T-cell (primary cell): ENCODE measurements at regions of chr15 and their contacts with region 1.

Region 1: DNA sequence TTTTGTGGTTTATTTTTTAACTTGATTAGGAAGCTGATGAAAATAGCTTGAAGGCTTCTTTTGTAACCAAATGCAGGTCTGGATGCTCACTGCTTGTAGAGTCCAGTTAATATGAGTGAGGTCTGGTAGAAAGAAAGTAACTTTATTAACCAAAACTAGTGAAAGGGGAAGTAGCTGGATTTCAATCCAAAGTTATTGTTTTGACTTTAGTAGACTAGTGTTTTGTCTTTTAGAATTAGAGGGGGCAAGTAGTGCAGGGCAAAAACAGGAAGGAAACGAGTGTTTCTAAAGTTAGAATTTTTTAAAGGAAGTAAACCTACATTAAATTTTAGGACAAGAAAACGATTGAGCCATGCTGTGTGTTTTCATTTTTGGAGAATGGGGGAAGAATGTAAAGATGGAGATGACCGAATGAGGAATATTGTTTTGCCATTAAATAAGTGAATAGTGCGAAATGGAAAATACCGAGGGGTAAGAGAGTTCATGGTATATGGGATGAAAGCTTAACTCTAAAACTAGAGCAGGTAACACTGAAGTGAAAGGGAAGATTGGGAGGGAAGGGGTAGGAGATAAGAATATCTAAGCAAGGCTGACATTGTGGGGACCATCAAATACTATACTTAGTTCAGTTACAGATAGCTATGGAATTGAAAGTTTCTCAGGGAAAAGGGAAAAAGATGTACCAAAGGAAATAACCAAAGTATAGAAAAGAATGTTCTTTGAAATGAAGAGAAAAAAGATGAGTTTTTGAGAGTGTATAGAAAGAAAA is 40.0 kb downstream of the USP3 start:
- DNase-seq: no peak
- ATAC-seq: peak in 1 of 4 experiments; percentile 15
- H3K4me3 ChIP-seq: no peak overlapping the region
- H3K4me3 Mint-ChIP-seq: peak overlapping the region; percentile 4 to 20 (median 9)
- H3K27ac ChIP-seq: no peak overlapping the region
- H3K27ac Mint-ChIP-seq: peak overlapping the region; percentile 58 to 67
- H3K4me1 ChIP-seq: peaks cover 3 to 18% of the 10 kb centered on the region in 2 experiments
- H3K4me1 Mint-ChIP-seq: peaks cover 59 to 71% (median 66%) of the 10 kb centered on the region in 3 donors
- H3K27me3 ChIP-seq: no peaks in the 10 kb centered on the region
- H3K27me3 Mint-ChIP-seq: no peaks in the 10 kb centered on the region

Region 2: GRCh38 chr15:63414474-63415120 is 129.8 kb before region 1 on chr15:
- CTCF ChIA-PET with region 1: no interaction called
- POLR2A ChIA-PET with region 1: no interaction called
- DNase-seq: peak in 11 of 35 experiments; percentile 2 to 55 (median 17)
- ATAC-seq: peak in 2 of 4 experiments; percentile 48 to 94
- H3K4me3 ChIP-seq: no peak overlapping the region
- H3K4me3 Mint-ChIP-seq: no peak overlapping the region
- H3K27ac ChIP-seq: no peak overlapping the region
- H3K27ac Mint-ChIP-seq: peak overlapping the region in 1 of 2 donors; percentile 58
- H3K4me1 ChIP-seq: peaks cover 0 to 4% of the 10 kb centered on the region in 2 experiments
- H3K4me1 Mint-ChIP-seq: peaks cover 0 to 8% (median 0%) of the 10 kb centered on the region in 3 donors
- H3K27me3 ChIP-seq: peaks cover 0 to 15% of the 10 kb centered on the region in 2 experiments
- H3K27me3 Mint-ChIP-seq: peaks cover 0 to 8% of the 10 kb centered on the region in 2 donors

Region 3: GRCh38 chr15:63531586-63531985 is 12.9 kb before region 1 on chr15:
- CTCF ChIA-PET with region 1: interaction called in 1 of 2 experiments, 16 read pairs
- POLR2A ChIA-PET with region 1: interaction called, 3 to 7 read pairs
- DNase-seq: no peak
- ATAC-seq: peak in 2 of 4 experiments; percentile 34 to 49
- H3K4me3 ChIP-seq: no peak overlapping the region
- H3K4me3 Mint-ChIP-seq: peak overlapping the region in 1 of 3 donors; percentile 65
- H3K27ac ChIP-seq: no peak overlapping the region
- H3K27ac Mint-ChIP-seq: peak overlapping the region in 1 of 2 donors; percentile 26
- H3K4me1 ChIP-seq: peaks cover 27 to 32% of the 10 kb centered on the region in 2 experiments
- H3K4me1 Mint-ChIP-seq: peaks cover 90 to 95% (median 94%) of the 10 kb centered on the region in 3 donors
- H3K27me3 ChIP-seq: no peaks in the 10 kb centered on the region
- H3K27me3 Mint-ChIP-seq: no peaks in the 10 kb centered on the region